Activated CD4-positive, alpha-beta T cell treated with anti-CD3 and anti-CD28 coated beads, Interleukin-2, amount 10 ng/mL, durations not matched to agents 7 days and 5 days (primary cell): ENCODE measurements at regions of chr6 and their contacts with region 1.

Region 1: DNA sequence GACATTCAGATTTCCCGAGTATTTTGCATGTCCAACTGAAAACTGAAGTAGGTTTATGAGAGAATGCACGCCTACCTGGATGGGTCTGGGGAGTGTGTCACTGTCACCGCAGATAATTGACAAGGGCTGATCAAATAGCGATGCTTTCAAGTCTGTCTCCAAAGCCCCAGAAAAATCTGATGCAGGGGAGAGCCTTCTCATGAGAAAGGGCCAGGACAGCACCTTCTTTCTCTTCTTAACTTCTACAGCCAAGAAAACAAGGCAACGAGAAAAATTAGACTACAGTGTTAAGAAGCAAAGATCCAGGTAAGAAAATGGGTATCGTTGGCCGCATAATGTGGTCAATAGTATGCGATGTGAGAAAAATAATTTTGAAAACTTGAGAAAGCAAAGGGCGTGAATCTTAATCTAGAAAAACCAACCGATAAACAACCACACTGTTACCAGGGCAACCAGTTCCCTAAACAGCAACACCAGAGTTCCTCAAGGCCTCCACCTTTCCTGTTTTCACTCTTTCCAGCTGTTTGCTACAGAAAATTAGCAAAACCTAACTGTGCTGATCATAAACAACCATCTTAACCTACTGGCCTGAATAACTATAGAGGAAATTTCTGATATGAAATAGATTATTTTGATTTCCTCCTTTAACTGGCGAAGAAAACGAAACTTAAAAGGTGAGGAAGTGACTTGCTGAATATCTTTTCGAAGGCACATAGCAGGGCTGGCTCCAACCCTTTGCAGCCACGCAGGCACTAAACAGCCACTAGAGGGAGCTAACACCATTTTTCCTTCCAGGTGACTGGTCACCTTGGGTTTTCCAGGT is 2.6 kb downstream of the TAGAP start:
- DNase-seq: peak; percentile 86
- H3K4me3 Mint-ChIP-seq: peak overlapping the region; percentile 97
- H3K27ac Mint-ChIP-seq: peak overlapping the region; percentile 97
- H3K4me1 Mint-ChIP-seq: peaks cover 61% of the 10 kb centered on the region
- H3K27me3 Mint-ChIP-seq: no peaks in the 10 kb centered on the region

Region 2: GRCh38 chr6:159056003-159056402 is 13.8 kb after region 1 on chr6:
- CTCF ChIA-PET with region 1: interaction called, 34 read pairs
- POLR2A ChIA-PET with region 1: interaction called, 4 read pairs
- DNase-seq: no peak
- H3K4me3 Mint-ChIP-seq: peak overlapping the region; percentile 4
- H3K27ac Mint-ChIP-seq: peak overlapping the region; percentile 74
- H3K4me1 Mint-ChIP-seq: peaks cover 65% of the 10 kb centered on the region
- H3K27me3 Mint-ChIP-seq: no peaks in the 10 kb centered on the region

Region 3: GRCh38 chr6:159062564-159062945 is 20.3 kb after region 1 on chr6:
- CTCF ChIA-PET with region 1: interaction called, 10 read pairs
- POLR2A ChIA-PET with region 1: interaction called, 9 read pairs
- DNase-seq: peak; percentile 82
- H3K4me3 Mint-ChIP-seq: peak overlapping the region; percentile 41
- H3K27ac Mint-ChIP-seq: peak overlapping the region; percentile 98
- H3K4me1 Mint-ChIP-seq: peaks cover 78% of the 10 kb centered on the region
- H3K27me3 Mint-ChIP-seq: no peaks in the 10 kb centered on the region